Naive thymus-derived CD4-positive, alpha-beta T cell (primary cell): ENCODE measurements at regions of chr11 and their contacts with region 1.

Region 1: GRCh38 chr11:8033305-8034105 is 46.4 kb downstream of the EIF3F start:
- DNase-seq: peak in 7 of 9 donors; percentile 28 to 49 (median 39)
- ATAC-seq: peak; percentile 83
- H3K4me3 ChIP-seq: no peak overlapping the region
- H3K4me3 Mint-ChIP-seq: peak overlapping the region in 5 of 10 donors; percentile 8 to 37 (median 33)
- H3K27ac ChIP-seq: no peak overlapping the region
- H3K27ac Mint-ChIP-seq: no peak overlapping the region
- H3K4me1 ChIP-seq: no peaks in the 10 kb centered on the region
- H3K4me1 Mint-ChIP-seq: peaks cover 0 to 8% (median 5%) of the 10 kb centered on the region in 7 donors
- H3K27me3 ChIP-seq: peaks cover 0 to 5% of the 10 kb centered on the region in 2 donors
- H3K27me3 Mint-ChIP-seq: peaks cover 5 to 43% (median 31%) of the 10 kb centered on the region in 5 donors

Region 2: DNA sequence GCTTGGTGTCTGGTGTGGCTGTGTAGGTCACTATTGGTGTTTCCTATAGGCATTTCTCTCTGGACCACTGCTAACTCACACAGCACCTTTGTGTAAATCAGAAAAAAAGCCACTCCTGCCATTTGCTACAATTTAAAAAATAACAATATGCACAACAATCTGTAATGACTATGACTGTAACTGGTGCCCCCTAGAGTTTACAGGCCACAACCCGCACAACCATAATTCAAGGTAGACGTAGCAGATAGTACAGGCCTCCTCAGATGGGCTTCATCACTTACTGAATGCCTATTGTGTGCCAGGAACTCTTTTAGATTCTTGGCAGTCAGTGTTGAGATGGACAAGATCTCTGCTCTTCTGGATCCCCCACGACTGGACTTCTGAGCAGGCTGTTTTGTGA is 734.1 kb before region 1 on chr11:
- CTCF ChIA-PET with region 1: no interaction called
- POLR2A ChIA-PET with region 1: no interaction called
- intact Hi-C with region 1: no loop called
- DNase-seq: no peak
- ATAC-seq: no peak
- H3K4me3 ChIP-seq: no peak overlapping the region
- H3K4me3 Mint-ChIP-seq: no peak overlapping the region
- H3K27ac ChIP-seq: no peak overlapping the region
- H3K27ac Mint-ChIP-seq: no peak overlapping the region
- H3K4me1 ChIP-seq: no peaks in the 10 kb centered on the region
- H3K4me1 Mint-ChIP-seq: no peaks in the 10 kb centered on the region
- H3K27me3 ChIP-seq: no peaks in the 10 kb centered on the region
- H3K27me3 Mint-ChIP-seq: peaks cover 0 to 29% (median 20%) of the 10 kb centered on the region in 5 donors

Region 3: GRCh38 chr11:8006349-8006977 is 27.0 kb before region 1 on chr11:
- CTCF ChIA-PET with region 1: interaction called, 3 read pairs
- POLR2A ChIA-PET with region 1: no interaction called
- intact Hi-C with region 1: loop called in 1 of 2 experiments (anchors 1 kb)
- DNase-seq: peak in 6 of 9 donors; percentile 19 to 34 (median 28)
- ATAC-seq: peak; percentile 81
- H3K4me3 ChIP-seq: no peak overlapping the region
- H3K4me3 Mint-ChIP-seq: no peak overlapping the region
- H3K27ac ChIP-seq: no peak overlapping the region
- H3K27ac Mint-ChIP-seq: no peak overlapping the region
- H3K4me1 ChIP-seq: no peaks in the 10 kb centered on the region
- H3K4me1 Mint-ChIP-seq: no peaks in the 10 kb centered on the region
- H3K27me3 ChIP-seq: no peaks in the 10 kb centered on the region
- H3K27me3 Mint-ChIP-seq: peaks cover 0 to 11% (median 6%) of the 10 kb centered on the region in 5 donors

Region 4: DNA sequence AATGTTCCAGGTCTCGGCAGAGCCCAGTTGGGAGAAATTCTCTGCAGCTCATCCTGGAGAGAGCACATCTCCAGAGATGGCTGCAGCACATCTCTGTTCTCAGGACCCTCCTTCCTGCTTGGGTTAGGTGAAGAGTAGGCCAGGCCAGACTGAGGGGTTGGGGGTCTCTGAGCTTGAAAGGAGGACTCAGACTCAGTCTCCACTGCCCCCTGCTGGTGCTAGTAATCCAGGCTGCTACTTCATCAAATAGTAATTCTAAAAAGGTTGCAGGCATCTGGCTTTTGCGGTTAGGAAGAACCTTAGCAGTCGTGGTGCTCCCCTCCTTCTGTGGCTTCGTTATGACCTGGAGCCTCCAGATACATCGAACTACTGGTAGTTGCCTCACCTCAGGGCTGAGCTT is 57.3 kb after region 1 on chr11:
- CTCF ChIA-PET with region 1: no interaction called
- POLR2A ChIA-PET with region 1: no interaction called
- intact Hi-C with region 1: loop called in 1 of 2 experiments (anchors 2 kb)
- DNase-seq: no peak
- ATAC-seq: no peak
- H3K4me3 ChIP-seq: no peak overlapping the region
- H3K4me3 Mint-ChIP-seq: no peak overlapping the region
- H3K27ac ChIP-seq: no peak overlapping the region
- H3K27ac Mint-ChIP-seq: no peak overlapping the region
- H3K4me1 ChIP-seq: no peaks in the 10 kb centered on the region
- H3K4me1 Mint-ChIP-seq: peaks cover 0 to 7% (median 4%) of the 10 kb centered on the region in 7 donors
- H3K27me3 ChIP-seq: no peaks in the 10 kb centered on the region
- H3K27me3 Mint-ChIP-seq: peaks cover 0 to 21% (median 5%) of the 10 kb centered on the region in 5 donors

Region 5: GRCh38 chr11:8099291-8099899 is 65.9 kb after region 1 on chr11:
- CTCF ChIA-PET with region 1: interaction called, 36 read pairs
- POLR2A ChIA-PET with region 1: no interaction called
- intact Hi-C with region 1: loop called (anchors 1 kb)
- DNase-seq: peak; percentile 39 to 66 (median 55)
- ATAC-seq: peak; percentile 60
- H3K4me3 ChIP-seq: no peak overlapping the region
- H3K4me3 Mint-ChIP-seq: no peak overlapping the region
- H3K27ac ChIP-seq: no peak overlapping the region
- H3K27ac Mint-ChIP-seq: peak overlapping the region in 1 of 9 donors; percentile 14
- H3K4me1 ChIP-seq: no peaks in the 10 kb centered on the region
- H3K4me1 Mint-ChIP-seq: peaks cover 0 to 2% (median 0%) of the 10 kb centered on the region in 7 donors
- H3K27me3 ChIP-seq: no peaks in the 10 kb centered on the region
- H3K27me3 Mint-ChIP-seq: no peaks in the 10 kb centered on the region